ENCODE measurements at regions of chr18 and their contacts with region 1.

Region 1: DNA sequence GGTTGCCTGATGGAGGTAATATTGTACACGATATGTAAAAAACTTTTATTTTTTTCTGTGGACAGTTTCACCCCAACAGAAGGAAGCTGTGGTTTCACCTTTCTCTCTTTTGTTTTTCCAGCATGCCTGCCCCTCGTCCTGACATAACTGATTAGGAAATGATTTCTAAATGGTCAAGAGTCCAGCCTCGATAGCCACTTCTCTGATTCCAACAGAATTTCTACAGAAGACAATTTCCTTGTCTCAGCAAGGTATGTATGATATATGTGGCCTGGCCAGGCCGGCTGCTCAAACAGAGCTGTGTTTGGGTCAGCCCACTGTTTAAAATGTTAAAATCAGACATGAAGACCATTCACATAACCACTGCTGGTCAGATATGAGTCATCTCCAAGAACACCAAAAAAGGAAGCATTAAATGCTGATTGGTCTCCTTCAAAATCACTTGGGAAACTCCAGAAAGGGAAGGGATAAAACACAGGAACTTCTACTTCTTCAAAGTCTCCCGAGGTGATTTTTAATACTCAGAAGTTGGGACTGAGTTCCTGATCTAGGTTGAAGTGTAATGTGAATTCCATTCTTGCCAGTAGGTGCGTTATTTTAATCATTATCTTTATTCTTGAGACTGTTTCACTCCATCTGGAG is 22.3 kb downstream of the ATP8B1 start:
- DNase-seq: peak; percentile 39
- H3K4me3 Mint-ChIP-seq: peak overlapping the region; percentile 63
- H3K27ac Mint-ChIP-seq: peak overlapping the region; percentile 92
- H3K4me1 Mint-ChIP-seq: peaks cover 58% of the 10 kb centered on the region
- H3K27me3 Mint-ChIP-seq: no peaks in the 10 kb centered on the region
- CTCF ChIP-seq: no peak

Region 2: GRCh38 chr18:57630002-57630753 is 150.6 kb before region 1 on chr18:
- CTCF ChIA-PET with region 1: interaction called, 3 read pairs
- intact Hi-C with region 1: loop called (anchors 10 kb)
- DNase-seq: peak; percentile 95
- H3K4me3 Mint-ChIP-seq: peak overlapping the region; percentile 80
- H3K27ac Mint-ChIP-seq: peak overlapping the region; percentile 73
- H3K4me1 Mint-ChIP-seq: peaks cover 38% of the 10 kb centered on the region
- H3K27me3 Mint-ChIP-seq: no peaks in the 10 kb centered on the region
- CTCF ChIP-seq: peak; percentile 79

Region 3: DNA sequence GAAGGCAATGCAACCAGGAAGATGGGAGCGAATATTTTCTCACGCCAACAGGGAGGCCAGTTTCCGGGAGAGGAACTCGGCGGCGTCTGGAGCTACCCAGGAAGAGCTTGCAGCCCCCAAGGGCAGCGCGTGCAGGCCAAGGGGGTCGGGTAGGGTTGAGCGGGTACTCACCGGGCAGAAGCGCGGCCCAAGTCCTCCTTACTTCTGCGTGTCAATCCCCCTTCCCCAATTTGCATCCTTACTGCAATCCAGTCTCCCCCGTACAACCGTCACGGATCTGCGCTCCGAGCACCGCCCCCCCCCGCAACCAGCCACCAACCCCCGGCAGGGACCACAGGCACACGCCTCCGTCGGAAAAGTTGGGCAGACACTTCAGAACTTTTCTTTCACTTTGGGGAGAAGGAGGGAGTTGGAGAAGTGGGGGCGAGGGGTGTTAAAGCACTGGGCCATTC is 21.0 kb after region 1 on chr18:
- CTCF ChIA-PET with region 1: no interaction called
- intact Hi-C with region 1: loop called (anchors 1 kb)
- DNase-seq: peak; percentile 56
- H3K4me3 Mint-ChIP-seq: peak overlapping the region; percentile 96
- H3K27ac Mint-ChIP-seq: peak overlapping the region; percentile 84
- H3K4me1 Mint-ChIP-seq: peaks cover 40% of the 10 kb centered on the region
- H3K27me3 Mint-ChIP-seq: no peaks in the 10 kb centered on the region
- CTCF ChIP-seq: no peak